ENCODE measurements at regions of chr1 and their contacts with region 1.

Region 1: GRCh38 chr1:172429331-172430127 is 9.0 kb downstream of the C1orf105 start:
- DNase-seq: peak in 2 of 10 donors; percentile 9 to 58
- H3K4me3 ChIP-seq: no peak overlapping the region
- H3K27ac ChIP-seq: no peak overlapping the region
- H3K27me3 ChIP-seq: no peaks in the 10 kb centered on the region
- CTCF ChIP-seq: peak; percentile 48 to 93 (median 80)

Region 2: DNA sequence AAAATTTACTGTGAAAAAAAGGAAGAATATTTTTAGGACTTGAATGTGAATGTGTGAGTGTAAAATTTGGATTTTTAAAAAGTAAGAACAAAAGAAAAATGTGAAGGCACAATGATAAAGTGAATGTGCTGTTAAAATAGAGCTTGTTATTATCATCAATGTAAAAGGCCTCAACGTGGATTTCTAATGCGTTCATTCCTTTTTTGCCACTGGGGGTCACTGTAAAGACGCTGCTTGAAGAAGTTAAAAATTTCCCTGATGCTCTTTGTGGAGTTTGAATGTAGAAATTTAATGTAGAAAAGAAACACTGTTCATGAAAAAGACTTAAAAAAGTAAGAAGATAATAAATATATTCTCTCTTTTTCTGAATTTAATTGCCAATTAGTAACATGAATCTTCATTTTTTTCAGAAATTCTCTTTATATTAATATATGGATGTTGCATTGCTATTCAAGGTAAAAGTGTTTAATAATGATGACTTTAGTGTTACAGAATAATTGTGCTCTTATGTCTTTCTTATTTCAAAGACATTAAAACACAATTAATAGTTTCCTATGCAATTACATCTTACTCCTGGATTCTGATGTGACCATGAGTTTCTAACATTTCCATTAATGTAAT is 426.7 kb before region 1 on chr1:
- intact Hi-C with region 1: loop called in 1 of 2 experiments (anchors 5 kb)
- DNase-seq: peak in 1 of 10 donors; percentile 28
- H3K4me3 ChIP-seq: no peak overlapping the region
- H3K27ac ChIP-seq: peak overlapping the region in 25 of 59 donors; percentile 5 to 68 (median 28)
- H3K27me3 ChIP-seq: no peaks in the 10 kb centered on the region
- CTCF ChIP-seq: peak; percentile 42 to 90 (median 73)

Region 3: DNA sequence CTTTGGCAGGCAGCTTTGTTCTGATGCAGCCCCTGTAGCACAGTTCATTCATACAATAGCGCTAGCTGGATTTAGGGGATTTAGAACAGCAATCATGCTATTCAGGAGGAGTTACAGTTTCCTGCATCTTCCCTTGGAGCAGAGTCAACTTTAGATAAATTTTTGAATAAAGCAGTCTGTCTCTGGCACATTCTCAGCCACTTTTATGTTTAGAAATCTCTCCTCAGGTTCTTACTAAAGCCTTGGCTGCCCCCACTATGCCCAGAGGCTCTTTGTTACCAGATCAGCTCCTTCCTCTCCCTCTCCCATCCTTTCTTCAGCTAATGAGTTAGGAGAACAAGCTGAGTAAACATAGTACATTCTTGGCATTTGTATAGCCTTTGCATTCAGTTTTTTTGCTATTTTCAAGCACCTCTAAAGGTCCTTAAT is 31.4 kb after region 1 on chr1:
- intact Hi-C with region 1: no loop called
- DNase-seq: no peak
- H3K4me3 ChIP-seq: no peak overlapping the region
- H3K27ac ChIP-seq: no peak overlapping the region
- H3K27me3 ChIP-seq: no peaks in the 10 kb centered on the region
- CTCF ChIP-seq: no peak

Region 4: GRCh38 chr1:172588296-172589291 is 159.1 kb after region 1 on chr1:
- intact Hi-C with region 1: no loop called
- DNase-seq: no peak
- H3K4me3 ChIP-seq: no peak overlapping the region
- H3K27ac ChIP-seq: no peak overlapping the region
- H3K27me3 ChIP-seq: no peaks in the 10 kb centered on the region
- CTCF ChIP-seq: no peak